Endothelial cell of umbilical vein (primary cell): ENCODE measurements at regions of chr4 and their contacts with region 1.

Region 1: DNA sequence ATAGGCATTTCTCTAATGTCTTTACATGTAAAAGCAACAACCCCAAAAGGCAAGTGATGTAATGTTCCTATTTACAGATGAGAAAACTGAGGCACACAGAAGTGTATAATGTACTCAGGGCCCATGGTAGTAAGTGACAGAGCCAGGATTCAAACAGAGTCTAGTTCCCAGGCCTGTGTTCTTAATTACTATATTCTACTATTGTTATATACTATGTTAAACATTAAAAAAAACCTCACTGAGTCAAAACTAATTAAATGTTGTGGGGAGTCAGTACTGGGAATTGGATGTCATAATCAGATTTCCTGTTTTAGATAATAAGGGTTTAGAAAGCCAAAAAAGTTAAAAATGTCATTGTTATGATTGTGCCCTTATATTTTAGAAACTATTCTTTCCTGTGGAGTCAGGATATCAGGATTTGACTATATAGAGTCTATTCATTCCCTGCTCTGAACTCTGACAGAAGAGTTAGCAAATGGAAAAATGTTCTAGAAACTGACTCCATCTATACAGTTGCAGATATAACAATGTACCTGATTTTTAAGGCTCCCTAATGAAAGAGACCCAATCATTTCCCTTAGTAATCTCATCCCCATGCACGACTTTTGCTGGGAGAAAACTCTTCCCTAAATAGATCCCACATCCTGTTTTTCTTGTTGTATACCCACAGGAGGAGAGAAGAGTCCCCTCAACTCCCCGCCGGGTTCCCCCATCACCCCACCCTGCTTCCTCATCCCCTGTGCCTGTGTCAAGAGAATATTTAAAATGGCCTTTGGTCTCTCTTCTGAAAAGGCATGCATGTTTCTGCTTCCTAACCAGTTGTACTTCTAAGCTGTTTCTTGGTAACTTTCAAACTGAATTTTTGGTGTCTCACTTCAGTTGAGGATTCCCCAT is 69.7 kb downstream of the REELD1 start:
- DNase-seq: peak; percentile 27
- H3K4me3 ChIP-seq: no peak overlapping the region
- H3K27ac ChIP-seq: no peak overlapping the region
- H3K4me1 ChIP-seq: peaks cover 4% of the 10 kb centered on the region
- H3K27me3 ChIP-seq: no peaks in the 10 kb centered on the region
- CTCF ChIP-seq: no peak
- POLR2A ChIP-seq: no peak

Region 2: GRCh38 chr4:146265950-146266490 is 18.0 kb before region 1 on chr4:
- CTCF ChIA-PET with region 1: no interaction called
- POLR2A ChIA-PET with region 1: no interaction called
- dilution Hi-C with region 1: no loop called
- intact Hi-C with region 1: loop called (anchors 2 kb)
- DNase-seq: no peak
- H3K4me3 ChIP-seq: no peak overlapping the region
- H3K27ac ChIP-seq: no peak overlapping the region
- H3K4me1 ChIP-seq: no peaks in the 10 kb centered on the region
- H3K27me3 ChIP-seq: no peaks in the 10 kb centered on the region
- CTCF ChIP-seq: no peak
- POLR2A ChIP-seq: no peak